Left ventricle myocardium superior (tissue), 1 donor: ENCODE measurements at regions of chr17 and their contacts with region 1.

Region 1: DNA sequence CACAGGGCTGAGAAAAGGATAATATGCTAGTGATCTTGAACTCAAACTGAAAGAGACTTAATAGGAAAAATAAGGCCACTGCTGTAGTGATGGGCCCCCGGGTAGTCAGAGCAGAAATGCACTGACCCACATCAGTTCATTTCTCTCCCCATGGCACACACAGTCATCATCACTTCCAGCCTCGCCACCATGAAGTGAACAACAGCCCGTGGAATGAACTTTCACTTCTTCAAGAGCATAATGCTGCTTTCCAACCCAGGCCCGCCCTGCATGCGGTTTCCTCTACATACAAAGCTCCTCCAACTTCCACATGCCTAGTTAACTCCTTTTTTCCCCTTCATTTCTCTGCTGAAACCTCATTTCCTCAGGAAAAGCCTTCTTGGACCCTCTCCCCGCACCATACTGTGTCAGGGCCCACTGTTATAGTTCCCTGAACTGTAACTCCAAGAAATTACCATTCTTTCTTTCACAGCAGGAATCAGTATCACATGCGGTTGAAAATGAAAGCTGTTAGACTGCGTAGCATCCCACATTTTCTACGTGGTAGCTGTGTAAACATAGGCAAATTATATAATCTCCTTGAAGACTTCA is 65.8 kb upstream of the SMIM36 start:
- DNase-seq: peak; percentile 62
- ATAC-seq: peak; percentile 84

Region 2: GRCh38 chr17:55487695-55488429 is 89.2 kb before region 1 on chr17:
- intact Hi-C with region 1: no loop called
- DNase-seq: no peak
- ATAC-seq: no peak

Region 3: GRCh38 chr17:55625521-55625920 is 48.4 kb after region 1 on chr17:
- intact Hi-C with region 1: loop called (anchors 10 kb)
- DNase-seq: no peak
- ATAC-seq: no peak